AG04450 (cell line): ENCODE measurements at regions of chr7 and their contacts with region 1.

Region 1: GRCh38 chr7:134458806-134459698 is at the start of gene AKR1B1:
- DNase-seq: peak; percentile 81
- H3K4me3 ChIP-seq: peak within 1 kb of the TSS; percentile 91
- H3K27ac ChIP-seq: peak within 1 kb of the TSS; percentile 57
- H3K27me3 ChIP-seq: no peaks in the 10 kb centered on the region
- CTCF ChIP-seq: peak; percentile 76
- polyA plus RNA-seq, gene AKR1B1: 337 and 347 TPM in 2 replicates

Region 2: DNA sequence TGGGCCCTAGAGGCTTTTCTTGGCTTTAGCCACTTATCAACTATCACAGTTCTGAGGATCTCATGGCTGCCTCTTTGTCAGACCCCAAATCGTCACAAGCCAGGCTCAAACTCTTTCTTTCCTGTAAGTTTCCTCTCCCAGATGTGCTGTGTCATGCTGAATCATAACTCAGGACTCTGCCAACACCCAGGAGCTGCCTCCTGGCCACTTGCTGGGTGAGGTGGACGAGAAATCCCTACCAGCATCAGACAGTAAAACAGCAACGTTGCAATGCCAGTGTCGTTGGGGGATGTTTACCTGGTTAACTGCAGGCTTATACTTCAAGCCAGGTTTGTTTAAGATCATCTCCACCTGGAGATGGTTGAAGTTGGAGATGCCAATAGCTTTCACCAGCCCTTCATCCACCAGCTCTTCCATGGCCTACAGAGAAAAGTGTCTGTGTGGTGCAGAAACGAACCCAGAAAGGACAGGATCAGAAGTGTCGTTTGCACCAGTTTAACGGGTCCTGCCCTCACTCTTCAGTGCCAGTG is 10.3 kb before region 1 on chr7:
- CTCF ChIA-PET with region 1: interaction called, 18 read pairs
- POLR2A ChIA-PET with region 1: interaction called, 3 read pairs
- DNase-seq: peak; percentile 74
- H3K4me3 ChIP-seq: no peak overlapping the region
- H3K27ac ChIP-seq: peak overlapping the region; percentile 93
- H3K27me3 ChIP-seq: no peaks in the 10 kb centered on the region
- CTCF ChIP-seq: no peak

Region 3: DNA sequence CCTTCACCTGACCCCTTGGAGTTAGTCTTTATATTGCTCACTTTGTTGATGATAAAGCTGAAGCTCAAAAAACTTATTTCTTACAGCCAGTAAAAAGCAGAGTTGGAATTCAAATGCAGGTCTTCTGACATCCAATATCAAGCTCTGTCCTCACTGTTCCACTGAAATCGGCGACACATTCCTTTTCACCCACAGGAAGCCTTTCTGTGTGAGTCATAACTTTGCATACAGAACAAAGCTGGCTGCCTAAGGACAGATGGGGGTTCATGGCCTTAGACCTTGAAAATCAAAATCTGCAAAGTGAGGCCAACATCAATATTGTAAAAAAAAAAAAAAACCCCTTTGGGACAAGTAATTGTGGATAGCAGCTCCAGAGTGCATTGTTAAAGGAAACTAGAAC is 21.7 kb after region 1 on chr7:
- CTCF ChIA-PET with region 1: interaction called, 12 read pairs
- POLR2A ChIA-PET with region 1: interaction called, 4 read pairs
- DNase-seq: no peak
- H3K4me3 ChIP-seq: no peak overlapping the region
- H3K27ac ChIP-seq: no peak overlapping the region
- H3K27me3 ChIP-seq: no peaks in the 10 kb centered on the region
- CTCF ChIP-seq: no peak